Activated T-helper 1 cell treated with anti-CD3 and anti-CD28 coated beads, Interleukin-12 subunit alpha, Interleukin-12 subunit beta, Interleukin-2, Interleukin-4 antibody, amounts not matched to agents 30 ng/mL and 10 ng/mL and 1 ng/mL, durations not matched to agents 14 hours and 24 hours and 36 hours (primary cell): ENCODE measurements at regions of chr15 and their contacts with region 1.

Region 1: DNA sequence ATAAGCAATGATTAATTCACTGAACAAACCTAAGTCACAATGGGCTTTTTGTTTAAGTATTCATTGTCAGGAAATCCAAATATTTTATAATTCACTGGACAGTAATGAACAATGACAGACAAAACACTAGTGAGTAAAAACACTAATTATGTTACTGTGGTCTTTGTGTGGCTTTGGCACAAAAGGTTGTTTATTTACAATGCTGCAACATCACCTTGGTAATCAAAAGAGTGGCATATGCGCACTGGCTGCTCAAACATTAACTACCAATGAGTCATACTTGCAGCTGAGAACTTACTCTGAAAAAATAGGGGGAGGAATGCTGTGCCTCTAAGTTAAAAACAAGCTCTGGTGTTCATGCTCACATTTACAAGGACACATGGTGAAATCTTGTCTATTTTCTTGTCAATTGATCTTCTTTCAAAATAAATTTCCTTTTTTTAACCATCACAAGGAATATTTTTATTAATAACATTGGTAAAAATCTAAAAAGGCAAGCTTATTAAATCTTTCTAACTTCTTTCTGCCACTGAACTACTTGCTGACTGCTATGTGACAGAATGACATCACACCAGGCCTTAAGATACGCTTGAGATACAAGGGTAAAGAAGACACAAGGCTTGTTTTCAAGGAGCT is 85.2 kb upstream of the PPIB start:
- DNase-seq: peak; percentile 27
- H3K4me3 Mint-ChIP-seq: peak overlapping the region; percentile 6
- H3K27ac Mint-ChIP-seq: peak overlapping the region; percentile 76
- H3K4me1 Mint-ChIP-seq: peaks cover 57% of the 10 kb centered on the region
- H3K27me3 Mint-ChIP-seq: peaks cover 2% of the 10 kb centered on the region

Region 2: DNA sequence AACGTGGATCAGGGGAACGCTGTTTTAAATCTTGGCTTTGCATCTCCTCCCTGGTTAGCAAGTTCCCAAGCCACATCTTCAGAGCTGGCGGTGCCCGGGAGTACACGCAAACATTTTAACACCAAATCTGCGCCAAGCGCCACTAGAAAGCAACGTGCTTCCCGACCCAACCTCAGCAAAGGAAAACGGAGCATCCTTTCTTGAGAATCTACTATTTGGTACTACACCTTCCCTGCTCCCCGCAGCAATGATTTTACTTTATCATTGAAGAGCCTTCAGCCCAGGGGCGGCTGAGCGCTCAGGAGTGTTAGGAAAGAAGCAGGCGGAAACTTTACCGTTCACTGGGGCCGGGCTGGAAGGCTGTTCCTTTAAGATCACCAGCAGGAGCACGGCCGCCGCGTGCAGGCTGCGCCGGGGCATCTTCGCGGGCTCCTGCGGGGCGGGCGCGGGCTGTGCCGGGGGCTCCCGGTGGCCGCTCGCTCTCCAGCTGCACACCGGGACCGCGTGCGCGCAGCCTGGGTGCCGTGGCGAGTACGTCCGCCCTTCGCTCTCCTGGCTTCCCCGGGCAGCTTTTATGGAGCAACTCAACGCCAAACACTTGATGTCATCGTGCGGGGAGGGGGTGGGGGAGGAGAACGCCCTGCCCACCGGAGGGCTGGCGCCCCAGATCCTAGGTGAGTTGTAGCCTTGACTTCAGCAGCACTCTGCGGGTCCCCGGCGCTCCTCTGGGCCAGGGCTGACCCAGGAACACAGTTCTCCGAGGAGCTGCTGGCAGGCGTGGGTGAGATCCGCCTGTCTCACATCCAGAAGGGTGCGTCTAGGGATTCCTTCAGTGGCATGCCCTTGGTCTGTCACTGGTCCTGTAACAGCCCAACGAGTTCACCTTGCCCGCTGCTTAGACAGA is 866.5 kb before region 1 on chr15 and contains the start of gene CA12:
- intact Hi-C with region 1: no loop called
- DNase-seq: no peak
- H3K4me3 Mint-ChIP-seq: peak within 1 kb of the TSS; percentile 69
- H3K27ac Mint-ChIP-seq: no peak within 1 kb of the TSS
- H3K4me1 Mint-ChIP-seq: peaks cover 25% of the 10 kb centered on the region
- H3K27me3 Mint-ChIP-seq: peaks cover 48% of the 10 kb centered on the region
- total RNA-seq, gene CA12: 0.29 and 0.36 TPM in 2 replicates

Region 3: DNA sequence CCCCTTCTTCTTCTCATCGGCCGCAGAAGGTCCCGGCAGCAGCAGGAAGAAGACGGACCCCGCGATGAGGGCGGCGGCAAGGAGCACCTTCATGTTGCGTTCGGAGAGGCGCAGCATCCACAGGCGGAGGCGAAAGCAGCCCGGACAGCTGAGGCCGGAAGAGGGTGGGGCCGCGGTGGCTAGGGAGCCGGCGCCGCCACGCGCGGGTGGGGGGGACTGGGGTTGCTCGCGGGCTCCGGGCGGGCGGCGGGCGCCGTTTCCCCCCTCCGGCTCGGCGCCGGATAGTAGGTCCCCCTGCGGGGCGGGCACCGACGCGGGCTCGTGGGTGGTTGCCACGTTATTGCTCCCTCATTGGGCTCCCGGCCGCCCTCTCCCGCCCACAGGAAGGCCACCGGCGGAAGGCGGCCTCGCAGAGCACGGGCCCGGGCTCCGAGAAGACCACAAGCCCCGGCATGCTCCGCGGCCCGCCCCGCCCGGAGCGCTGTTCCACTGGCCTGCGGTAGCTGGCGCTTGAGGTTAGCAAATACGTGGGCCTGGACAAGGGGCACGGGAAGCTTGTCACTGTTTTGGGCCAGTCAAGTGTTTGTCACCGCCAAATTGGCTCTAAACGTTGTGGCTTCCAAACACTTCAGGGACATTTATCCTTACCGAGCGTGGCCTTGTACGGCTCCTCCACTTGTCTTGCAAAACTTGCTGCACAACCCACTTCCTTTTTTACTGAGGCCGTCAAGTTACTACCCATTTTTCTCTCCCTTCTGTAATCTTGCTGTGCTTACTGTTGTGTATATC is 85.0 kb before region 1 on chr15 and contains the start of gene PPIB:
- intact Hi-C with region 1: loop called (anchors 1 kb)
- DNase-seq: peak; percentile 97
- H3K4me3 Mint-ChIP-seq: peak within 1 kb of the TSS; percentile 94
- H3K27ac Mint-ChIP-seq: peak within 1 kb of the TSS; percentile 93
- H3K4me1 Mint-ChIP-seq: peaks cover 56% of the 10 kb centered on the region
- H3K27me3 Mint-ChIP-seq: no peaks in the 10 kb centered on the region
- total RNA-seq, gene PPIB: 383 and 388 TPM in 2 replicates

Region 4: DNA sequence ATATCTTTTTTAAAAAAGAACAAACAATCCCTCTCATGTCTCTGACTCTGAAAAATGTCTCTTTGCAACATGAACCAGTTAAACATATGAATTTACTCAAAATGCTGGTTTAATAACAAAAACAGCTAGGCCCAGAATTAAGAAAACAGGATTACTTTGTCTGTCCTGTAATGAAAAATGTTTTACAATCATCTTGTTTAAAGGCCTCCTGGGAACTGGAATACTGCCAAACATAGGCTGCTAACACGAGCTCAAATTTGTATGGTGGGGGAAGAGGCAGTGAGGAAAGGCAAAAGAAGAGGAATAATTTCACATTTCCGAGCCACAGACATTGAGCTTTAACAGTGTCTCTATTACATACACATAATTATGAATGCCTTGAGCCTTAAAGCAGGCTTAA is 23.5 kb before region 1 on chr15:
- intact Hi-C with region 1: loop called (anchors 1 kb)
- DNase-seq: no peak
- H3K4me3 Mint-ChIP-seq: no peak overlapping the region
- H3K27ac Mint-ChIP-seq: no peak overlapping the region
- H3K4me1 Mint-ChIP-seq: peaks cover 20% of the 10 kb centered on the region
- H3K27me3 Mint-ChIP-seq: peaks cover 2% of the 10 kb centered on the region

Region 5: GRCh38 chr15:64235552-64235951 is 12.5 kb before region 1 on chr15:
- intact Hi-C with region 1: no loop called
- DNase-seq: no peak
- H3K4me3 Mint-ChIP-seq: no peak overlapping the region
- H3K27ac Mint-ChIP-seq: no peak overlapping the region
- H3K4me1 Mint-ChIP-seq: peaks cover 33% of the 10 kb centered on the region
- H3K27me3 Mint-ChIP-seq: peaks cover 2% of the 10 kb centered on the region

Region 6: DNA sequence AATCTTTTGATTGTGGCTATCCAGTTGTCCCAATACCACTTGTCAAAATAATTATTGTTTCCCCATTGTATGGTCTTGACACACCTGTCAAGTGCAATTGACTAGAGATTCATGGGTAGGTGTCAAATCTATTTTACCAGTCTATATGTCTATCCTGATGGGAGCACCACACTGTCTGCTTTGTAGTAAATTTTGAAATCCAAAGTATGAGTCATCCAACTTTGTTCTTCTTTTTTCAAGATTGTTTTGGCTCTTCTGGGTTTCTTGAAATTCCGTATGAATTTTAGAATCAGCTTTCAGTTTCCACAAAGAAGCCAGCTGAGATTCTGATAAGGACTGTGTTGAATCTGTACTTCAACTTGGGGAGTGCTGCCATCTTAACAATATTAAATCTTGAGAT is 36.0 kb after region 1 on chr15:
- intact Hi-C with region 1: loop called (anchors 5 kb)
- DNase-seq: no peak
- H3K4me3 Mint-ChIP-seq: no peak overlapping the region
- H3K27ac Mint-ChIP-seq: no peak overlapping the region
- H3K4me1 Mint-ChIP-seq: no peaks in the 10 kb centered on the region
- H3K27me3 Mint-ChIP-seq: no peaks in the 10 kb centered on the region

Region 7: GRCh38 chr15:64381000-64381752 is 133.2 kb after region 1 on chr15 and contains the start of gene PCLAF:
- intact Hi-C with region 1: loop called (anchors 1 kb)
- DNase-seq: peak; percentile 93
- H3K4me3 Mint-ChIP-seq: peak within 1 kb of the TSS; percentile 94
- H3K27ac Mint-ChIP-seq: peak within 1 kb of the TSS; percentile 92
- H3K4me1 Mint-ChIP-seq: peaks cover 16% of the 10 kb centered on the region
- H3K27me3 Mint-ChIP-seq: no peaks in the 10 kb centered on the region
- total RNA-seq, gene PCLAF: 58.6 and 69.8 TPM in 2 replicates

Region 8: GRCh38 chr15:64622410-64623260 is 374.6 kb after region 1 on chr15:
- intact Hi-C with region 1: loop called (anchors 5 kb)
- DNase-seq: peak; percentile 48
- H3K4me3 Mint-ChIP-seq: peak overlapping the region; percentile 53
- H3K27ac Mint-ChIP-seq: peak overlapping the region; percentile 80
- H3K4me1 Mint-ChIP-seq: peaks cover 76% of the 10 kb centered on the region
- H3K27me3 Mint-ChIP-seq: no peaks in the 10 kb centered on the region